ENCODE measurements at regions of chr11 and their contacts with region 1.

Region 1: DNA sequence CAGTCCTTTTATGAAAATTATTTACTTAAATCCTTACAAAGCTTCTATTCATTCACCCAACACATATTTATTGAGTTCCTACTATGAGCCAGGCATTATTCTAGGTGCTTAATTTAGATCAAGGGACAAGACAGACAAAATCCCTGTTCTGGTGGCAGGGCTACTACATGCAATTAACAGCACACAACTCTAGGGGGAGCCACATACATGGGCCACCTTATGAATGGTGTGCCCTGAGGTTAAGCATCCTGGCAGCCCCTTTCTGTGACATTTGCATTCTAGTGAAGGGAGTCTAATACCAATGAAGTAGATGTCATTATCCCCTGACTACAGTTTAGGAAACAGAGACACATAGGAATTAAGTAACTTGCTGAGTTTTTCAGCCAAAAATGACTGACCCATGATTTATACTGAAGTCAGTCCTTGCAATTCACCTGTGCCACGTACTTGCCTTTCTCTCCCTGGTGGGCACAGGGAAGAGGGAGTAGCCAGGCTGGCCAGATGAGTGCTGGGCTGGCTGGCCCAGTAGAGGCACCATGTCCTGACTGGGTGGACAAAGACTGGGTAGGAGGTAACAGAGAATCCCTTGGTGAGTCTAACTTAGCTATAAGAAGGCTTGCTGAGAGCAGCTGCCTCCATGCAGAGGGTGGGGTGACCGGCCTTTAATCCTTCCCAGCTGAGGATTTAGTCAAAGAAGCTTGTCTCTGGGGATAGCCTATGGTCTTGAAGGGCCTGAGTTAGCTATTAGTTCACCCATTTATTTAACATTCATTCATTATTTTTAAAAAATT is 52.0 kb upstream of the ELF5 start:
- DNase-seq: no peak
- H3K4me3 ChIP-seq: no peak overlapping the region
- H3K27ac ChIP-seq: peak overlapping the region; percentile 83
- H3K4me1 ChIP-seq: peaks cover 35% of the 10 kb centered on the region
- H3K27me3 ChIP-seq: no peaks in the 10 kb centered on the region
- CTCF ChIP-seq: peak; percentile 77

Region 2: DNA sequence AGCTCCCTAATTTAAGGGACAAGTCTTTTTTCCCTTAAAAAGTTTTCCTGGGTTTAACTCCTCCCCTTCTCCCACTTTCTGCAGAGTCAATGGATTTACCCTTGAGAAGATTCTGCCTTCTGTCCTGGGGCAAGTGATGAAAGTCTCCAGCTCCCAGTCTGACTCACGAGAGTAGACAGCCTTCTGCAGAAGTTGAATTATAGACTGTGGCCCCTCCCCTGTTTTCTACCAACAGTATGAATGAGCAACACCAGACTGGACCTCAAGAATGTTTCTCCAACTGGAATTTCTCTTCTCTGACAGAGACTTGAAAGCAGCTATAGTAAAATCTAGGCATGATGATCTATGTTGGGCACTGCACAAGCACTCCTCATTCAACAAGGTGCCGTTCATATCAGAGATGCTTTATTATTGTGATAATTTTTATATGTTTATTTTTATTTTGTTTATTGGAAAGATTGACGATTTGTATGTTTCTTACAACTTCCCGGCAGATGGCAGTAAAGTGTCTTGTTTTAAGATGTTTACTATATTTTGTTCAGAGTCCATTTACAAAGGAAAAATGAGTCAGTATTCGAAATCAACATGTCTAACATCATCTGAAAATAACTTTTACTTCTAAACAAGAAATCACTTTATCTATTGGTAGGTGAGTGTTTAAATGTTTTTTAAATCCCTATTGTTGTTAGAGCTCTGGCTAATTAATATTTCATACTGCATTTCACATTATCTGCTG is 730.3 kb before region 1 on chr11:
- CTCF ChIA-PET with region 1: no interaction called
- POLR2A ChIA-PET with region 1: interaction called, 13 read pairs
- intact Hi-C with region 1: no loop called
- DNase-seq: peak; percentile 18 to 69
- H3K4me3 ChIP-seq: no peak overlapping the region
- H3K27ac ChIP-seq: no peak overlapping the region
- H3K4me1 ChIP-seq: peaks cover 32% of the 10 kb centered on the region
- H3K27me3 ChIP-seq: no peaks in the 10 kb centered on the region
- CTCF ChIP-seq: peak; percentile 79

Region 3: DNA sequence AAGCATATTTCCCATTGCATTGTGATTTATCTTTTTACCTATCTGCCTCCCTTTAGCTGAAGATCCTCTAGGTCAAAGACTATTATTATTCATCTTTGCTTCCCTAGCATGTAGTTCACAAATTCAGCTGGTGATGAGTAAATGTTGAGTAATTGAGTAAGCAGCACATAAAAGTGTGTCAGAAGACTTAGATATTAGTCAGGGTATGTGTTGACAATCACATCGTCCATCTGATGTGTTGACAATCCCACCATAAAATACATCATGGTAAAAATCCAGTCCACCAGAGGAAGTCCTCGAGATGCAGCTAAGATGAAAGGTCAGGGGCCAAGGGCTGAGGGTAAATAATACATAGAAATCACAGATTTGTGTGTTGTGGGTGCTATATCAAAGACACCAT is 184.9 kb before region 1 on chr11:
- CTCF ChIA-PET with region 1: no interaction called
- POLR2A ChIA-PET with region 1: no interaction called
- intact Hi-C with region 1: loop called (anchors 10 kb)
- DNase-seq: peak in 1 of 2 experiments; percentile 85
- H3K4me3 ChIP-seq: no peak overlapping the region
- H3K27ac ChIP-seq: peak overlapping the region; percentile 73; the same call in 1 of the 2 replicates
- H3K4me1 ChIP-seq: peaks cover 36% of the 10 kb centered on the region
- H3K27me3 ChIP-seq: no peaks in the 10 kb centered on the region
- CTCF ChIP-seq: no peak

Region 4: DNA sequence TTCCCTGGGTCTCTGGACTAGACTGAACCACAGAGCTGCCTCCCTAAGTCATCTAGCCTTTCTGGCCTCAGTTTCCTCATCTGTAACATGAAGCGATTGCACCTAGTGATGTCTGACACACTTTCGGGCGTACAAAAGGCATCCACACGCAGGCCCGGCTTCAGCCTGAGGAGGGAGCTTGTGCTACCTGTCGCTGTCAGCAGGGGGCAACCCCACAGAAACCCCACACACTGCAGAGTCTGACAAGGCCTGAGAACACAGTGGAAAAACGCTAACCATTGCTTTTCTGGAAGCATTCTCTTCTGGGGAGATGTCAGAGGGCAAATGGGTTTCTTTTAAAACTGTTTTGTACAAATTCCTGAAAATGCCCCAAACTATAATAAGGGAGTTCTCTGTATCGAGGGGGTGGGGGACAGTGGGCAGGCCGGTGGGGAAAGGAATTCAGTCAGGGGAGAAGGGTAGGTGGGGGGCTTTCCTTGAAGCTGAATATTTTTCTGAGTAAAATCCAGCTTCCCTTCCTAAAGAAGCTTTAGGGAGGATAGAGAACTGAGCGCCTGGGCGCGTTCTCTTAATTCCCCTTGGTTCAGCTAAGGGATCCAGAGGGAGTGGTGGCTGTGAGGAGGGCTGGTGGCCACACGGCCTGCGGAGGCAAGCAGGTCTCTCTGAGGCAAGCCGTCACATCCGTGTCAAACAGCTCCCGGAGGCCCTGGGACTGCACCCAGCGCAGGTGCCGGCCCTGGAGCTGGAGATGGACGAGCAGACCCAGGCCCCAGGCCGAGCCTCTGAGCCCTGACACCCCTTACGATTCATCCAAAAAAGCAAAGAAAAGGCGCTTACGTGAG is 52.6 kb before region 1 on chr11:
- CTCF ChIA-PET with region 1: interaction called, 5 read pairs
- POLR2A ChIA-PET with region 1: no interaction called
- intact Hi-C with region 1: loop called (anchors 2 kb)
- DNase-seq: peak; percentile 58 to 73
- H3K4me3 ChIP-seq: peak overlapping the region; percentile 56
- H3K27ac ChIP-seq: peak overlapping the region; percentile 61
- H3K4me1 ChIP-seq: peaks cover 20% of the 10 kb centered on the region
- H3K27me3 ChIP-seq: no peaks in the 10 kb centered on the region
- CTCF ChIP-seq: peak; percentile 97

Region 5: DNA sequence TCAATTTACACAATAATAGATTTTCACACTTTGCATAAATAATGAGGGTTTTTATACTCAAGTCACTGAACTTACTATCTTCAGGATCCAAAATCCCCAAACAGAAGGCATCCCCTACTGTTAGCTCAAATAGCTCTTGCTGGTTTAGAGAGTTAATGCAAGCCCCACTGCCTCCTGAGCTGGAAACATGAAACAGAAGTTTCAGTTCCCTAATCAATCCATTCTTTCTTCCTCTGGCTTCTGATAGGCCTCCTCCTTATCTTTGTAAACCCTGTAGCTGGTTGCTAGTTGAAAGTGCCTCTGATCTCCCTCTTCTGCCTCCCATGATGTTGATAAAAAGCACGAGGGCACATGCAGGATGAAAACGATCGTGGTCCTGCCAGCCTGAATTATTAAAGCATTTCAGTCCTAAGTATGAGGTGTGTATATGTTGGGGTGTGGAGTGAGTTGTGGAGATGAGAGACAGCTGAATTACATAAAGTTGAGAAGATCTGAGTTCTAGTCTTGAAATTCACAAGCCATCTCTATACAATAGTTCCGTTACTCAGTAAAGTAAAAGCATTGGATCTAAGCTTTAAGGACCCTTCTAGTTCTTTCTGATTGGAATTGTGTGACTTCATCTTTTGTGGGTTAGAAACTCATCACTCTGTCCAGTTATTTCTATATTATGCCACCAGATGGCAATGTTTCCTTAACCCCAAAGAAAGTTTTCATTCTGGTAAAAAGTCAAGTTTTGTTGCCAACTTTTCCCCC is 20.3 kb after region 1 on chr11:
- CTCF ChIA-PET with region 1: no interaction called
- POLR2A ChIA-PET with region 1: no interaction called
- intact Hi-C with region 1: loop called (anchors 2 kb)
- DNase-seq: peak in 1 of 2 experiments; percentile 64
- H3K4me3 ChIP-seq: no peak overlapping the region
- H3K27ac ChIP-seq: peak overlapping the region; percentile 4; the same call in 1 of the 2 replicates
- H3K4me1 ChIP-seq: peaks cover 35% of the 10 kb centered on the region
- H3K27me3 ChIP-seq: no peaks in the 10 kb centered on the region
- CTCF ChIP-seq: peak; percentile 94

Region 6: DNA sequence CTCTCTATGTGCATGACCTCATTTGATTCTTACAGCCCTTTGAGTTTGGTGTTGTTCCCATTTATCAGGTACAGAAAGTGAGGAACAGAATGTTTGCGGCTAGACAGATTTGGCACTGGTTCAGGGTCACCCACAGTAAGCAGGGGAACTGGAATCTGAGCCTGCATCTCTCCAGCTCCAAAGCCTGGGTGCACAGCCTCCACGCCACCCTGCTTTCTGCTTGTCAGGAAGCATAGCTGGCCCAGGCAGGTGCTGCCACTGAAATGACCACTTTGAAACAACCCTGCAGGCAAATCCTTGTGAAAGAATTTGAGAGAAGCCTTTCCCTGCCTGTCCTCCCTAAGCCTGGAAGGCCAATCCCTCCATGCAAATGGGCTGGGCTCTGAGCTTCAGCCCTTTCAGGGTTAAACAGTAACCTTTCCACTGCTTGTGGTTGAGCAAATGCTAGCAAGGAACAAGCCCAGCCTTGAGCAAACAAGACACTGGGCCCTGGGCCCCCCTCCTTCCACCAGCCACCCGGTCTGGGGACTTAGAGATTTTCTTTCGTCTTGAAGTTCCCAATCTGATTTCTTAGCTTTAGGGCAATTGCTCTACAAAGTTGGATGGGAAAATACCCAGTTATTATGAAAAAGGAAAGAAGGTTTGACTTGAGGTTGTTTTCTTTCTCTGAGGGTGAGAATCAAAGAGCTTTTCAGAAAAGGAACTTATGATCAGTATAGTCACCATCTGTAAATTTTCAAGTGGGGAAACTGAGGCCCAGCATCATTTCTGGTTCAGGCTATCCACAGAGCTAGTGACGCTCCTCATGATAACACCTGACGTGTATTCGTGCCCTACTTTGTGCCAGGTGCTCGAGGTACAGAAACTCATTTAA is 74.7 kb after region 1 on chr11:
- CTCF ChIA-PET with region 1: interaction called, 3 read pairs
- POLR2A ChIA-PET with region 1: no interaction called
- intact Hi-C with region 1: loop called (anchors 2 kb)
- DNase-seq: peak; percentile 92 to 100
- H3K4me3 ChIP-seq: peak overlapping the region; percentile 38; the same call in 1 of the 2 replicates
- H3K27ac ChIP-seq: peak overlapping the region; percentile 84
- H3K4me1 ChIP-seq: peaks cover 98% of the 10 kb centered on the region
- H3K27me3 ChIP-seq: no peaks in the 10 kb centered on the region
- CTCF ChIP-seq: no peak

Region 7: DNA sequence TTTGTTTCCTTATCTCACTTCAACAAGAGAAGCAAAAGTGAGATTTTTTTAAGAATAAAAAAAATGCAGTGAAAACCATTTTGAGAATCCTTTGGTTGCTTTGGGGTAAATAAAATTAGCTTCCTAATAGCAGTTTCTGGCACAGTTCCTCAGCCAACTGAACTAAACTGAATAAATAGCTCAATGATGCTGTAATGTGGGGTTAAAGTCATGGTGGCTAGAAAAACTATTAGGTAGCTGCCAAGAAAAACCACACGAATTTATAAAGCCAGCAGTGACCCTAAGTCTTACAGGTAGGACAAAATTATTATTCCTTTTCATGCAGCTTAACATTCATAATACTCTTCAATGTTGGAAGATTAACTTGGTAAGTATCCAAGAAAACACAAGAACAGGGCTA is 208.2 kb after region 1 on chr11:
- CTCF ChIA-PET with region 1: no interaction called
- POLR2A ChIA-PET with region 1: no interaction called
- intact Hi-C with region 1: no loop called
- DNase-seq: peak in 1 of 2 experiments; percentile 68
- H3K4me3 ChIP-seq: no peak overlapping the region
- H3K27ac ChIP-seq: no peak overlapping the region
- H3K4me1 ChIP-seq: peaks cover 11% of the 10 kb centered on the region
- H3K27me3 ChIP-seq: no peaks in the 10 kb centered on the region
- CTCF ChIP-seq: no peak